Left ventricle myocardium inferior (tissue), 1 donor: ENCODE measurements at regions of chr6 and their contacts with region 1.

Region 1: DNA sequence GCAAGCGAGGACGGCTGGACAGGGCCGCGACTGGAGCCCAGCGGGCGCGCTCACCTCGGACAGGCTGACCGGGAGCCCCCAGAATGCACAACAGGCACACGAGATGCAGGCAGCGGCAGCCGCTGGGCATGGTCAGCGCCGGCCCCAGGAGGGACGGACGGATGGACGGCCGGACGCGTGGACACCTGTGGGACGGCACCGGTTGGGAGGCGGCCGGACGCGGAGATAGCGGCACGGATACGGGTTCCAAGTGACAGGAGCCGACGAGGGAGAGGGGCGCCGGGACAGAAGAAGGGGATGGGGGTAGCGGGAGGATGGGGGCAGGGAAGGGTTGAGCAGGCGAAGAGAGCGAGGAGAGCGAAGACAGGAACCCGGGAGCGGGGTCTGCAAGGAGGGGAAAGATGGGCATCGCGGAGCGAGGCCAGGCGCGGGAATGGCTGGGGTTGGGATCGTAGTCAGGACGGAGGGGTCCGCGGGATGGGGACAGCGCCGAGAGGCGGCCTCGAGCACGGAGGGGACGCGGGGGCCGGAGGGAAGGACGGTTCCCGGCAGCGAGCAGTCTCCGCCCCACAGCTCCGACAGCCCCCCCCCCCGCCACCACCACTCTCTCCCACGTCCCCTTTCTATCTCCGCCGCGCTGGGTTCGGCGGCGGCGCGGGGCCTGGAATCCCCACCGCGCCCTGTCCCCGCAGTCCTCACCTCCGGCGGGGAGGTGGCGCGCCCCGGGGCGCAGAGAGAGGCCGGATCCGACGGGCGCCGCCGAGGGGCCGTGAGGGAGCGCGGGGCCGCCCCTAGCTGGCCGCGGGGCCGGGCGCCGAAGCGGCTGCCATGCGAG is 435 bp downstream of the DLK2 start:
- DNase-seq: peak; percentile 88
- H3K4me3 ChIP-seq: peak overlapping the region; percentile 70
- H3K27ac ChIP-seq: no peak overlapping the region
- H3K4me1 ChIP-seq: peaks cover 27% of the 10 kb centered on the region
- H3K27me3 ChIP-seq: peaks cover 50% of the 10 kb centered on the region
- CTCF ChIP-seq: no peak

Region 2: DNA sequence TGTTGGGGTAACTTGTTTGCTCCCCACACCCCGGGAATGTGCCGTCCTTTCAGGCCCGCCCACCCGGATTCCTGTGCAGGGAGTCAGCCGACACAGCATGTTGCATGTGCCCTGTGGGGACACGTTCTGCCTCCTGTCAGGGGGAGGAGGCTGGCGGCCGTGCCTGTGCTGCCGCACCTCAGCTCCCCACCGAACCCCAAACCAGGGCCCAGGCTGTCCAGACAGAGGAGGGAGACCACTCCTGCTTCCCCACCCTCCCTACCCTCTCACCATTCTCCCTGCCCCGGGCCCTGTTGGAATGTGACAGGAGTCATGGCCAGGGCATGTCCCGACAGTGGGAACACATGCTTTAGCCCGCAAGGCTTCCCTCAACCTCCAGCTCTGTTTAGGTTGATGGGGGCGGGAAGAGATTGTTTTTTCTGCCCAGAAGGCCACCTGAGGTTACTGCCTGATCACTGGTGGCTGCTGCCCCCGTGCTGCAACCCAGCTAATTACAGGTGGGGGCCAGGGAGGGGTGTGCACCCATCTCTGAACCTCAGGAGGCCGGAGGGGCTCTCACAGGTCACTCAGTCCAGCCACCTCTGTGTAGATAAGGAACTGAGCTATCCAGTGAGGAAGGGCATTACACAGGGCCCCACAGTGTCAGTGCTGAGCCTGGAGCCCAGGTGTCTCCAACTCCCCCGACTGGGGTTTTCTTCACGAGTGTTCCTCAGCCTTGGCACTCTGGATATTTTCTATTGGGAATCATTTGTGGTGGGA is 41.6 kb after region 1 on chr6:
- intact Hi-C with region 1: loop called (anchors 5 kb)
- DNase-seq: no peak
- H3K4me3 ChIP-seq: no peak overlapping the region
- H3K27ac ChIP-seq: no peak overlapping the region
- H3K4me1 ChIP-seq: no peaks in the 10 kb centered on the region
- H3K27me3 ChIP-seq: no peaks in the 10 kb centered on the region
- CTCF ChIP-seq: peak; percentile 71

Region 3: GRCh38 chr6:43506667-43507471 is 52.0 kb after region 1 on chr6:
- intact Hi-C with region 1: loop called (anchors 5 kb)
- DNase-seq: peak; percentile 70
- H3K4me3 ChIP-seq: no peak overlapping the region
- H3K27ac ChIP-seq: no peak overlapping the region
- H3K4me1 ChIP-seq: peaks cover 62% of the 10 kb centered on the region
- H3K27me3 ChIP-seq: peaks cover 6% of the 10 kb centered on the region
- CTCF ChIP-seq: peak; percentile 95

Region 4: GRCh38 chr6:43584892-43585570 is 130.1 kb after region 1 on chr6:
- intact Hi-C with region 1: no loop called
- DNase-seq: no peak
- H3K4me3 ChIP-seq: no peak overlapping the region
- H3K27ac ChIP-seq: no peak overlapping the region
- H3K4me1 ChIP-seq: no peaks in the 10 kb centered on the region
- H3K27me3 ChIP-seq: no peaks in the 10 kb centered on the region
- CTCF ChIP-seq: no peak

Region 5: DNA sequence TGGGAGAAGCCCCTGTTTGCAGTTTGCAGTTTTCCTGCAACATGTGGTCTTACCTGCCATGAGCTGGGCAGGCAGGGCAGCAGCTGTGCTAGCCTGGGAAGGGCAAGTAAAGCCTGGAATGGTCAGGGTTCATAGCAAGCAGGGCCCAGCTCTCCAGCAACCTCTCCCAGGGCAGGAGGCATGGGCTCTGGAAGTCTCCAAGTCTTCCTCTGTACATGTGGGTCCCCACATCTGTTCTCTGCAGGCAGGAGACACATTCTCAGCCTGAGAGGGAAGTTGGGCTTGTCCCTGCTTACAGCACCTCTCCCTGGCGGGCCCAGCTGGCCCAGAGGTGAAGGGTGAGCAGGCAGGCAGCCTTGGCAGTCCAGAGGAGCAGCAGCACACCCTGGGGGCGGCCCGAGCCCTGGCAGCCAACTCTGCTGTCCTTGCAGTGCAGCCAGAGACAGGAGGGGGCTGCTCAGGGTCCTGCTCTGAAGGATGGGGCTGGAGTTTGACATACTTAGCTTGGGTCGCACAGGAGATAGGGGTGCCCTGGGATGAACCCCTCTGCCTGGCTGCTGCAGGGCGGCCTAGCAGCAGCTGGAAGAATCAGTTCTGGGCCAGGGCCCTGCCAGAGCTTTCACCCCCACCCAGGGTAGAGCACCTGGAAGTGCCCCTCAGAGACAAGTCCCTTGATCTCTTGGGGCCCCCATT is 496.3 kb after region 1 on chr6:
- intact Hi-C with region 1: no loop called
- DNase-seq: peak; percentile 62
- H3K4me3 ChIP-seq: no peak overlapping the region
- H3K27ac ChIP-seq: peak overlapping the region; percentile 92
- H3K4me1 ChIP-seq: peaks cover 28% of the 10 kb centered on the region
- H3K27me3 ChIP-seq: no peaks in the 10 kb centered on the region
- CTCF ChIP-seq: peak; percentile 68